ENCODE measurements at regions of chr1 and their contacts with region 1.

Region 1: DNA sequence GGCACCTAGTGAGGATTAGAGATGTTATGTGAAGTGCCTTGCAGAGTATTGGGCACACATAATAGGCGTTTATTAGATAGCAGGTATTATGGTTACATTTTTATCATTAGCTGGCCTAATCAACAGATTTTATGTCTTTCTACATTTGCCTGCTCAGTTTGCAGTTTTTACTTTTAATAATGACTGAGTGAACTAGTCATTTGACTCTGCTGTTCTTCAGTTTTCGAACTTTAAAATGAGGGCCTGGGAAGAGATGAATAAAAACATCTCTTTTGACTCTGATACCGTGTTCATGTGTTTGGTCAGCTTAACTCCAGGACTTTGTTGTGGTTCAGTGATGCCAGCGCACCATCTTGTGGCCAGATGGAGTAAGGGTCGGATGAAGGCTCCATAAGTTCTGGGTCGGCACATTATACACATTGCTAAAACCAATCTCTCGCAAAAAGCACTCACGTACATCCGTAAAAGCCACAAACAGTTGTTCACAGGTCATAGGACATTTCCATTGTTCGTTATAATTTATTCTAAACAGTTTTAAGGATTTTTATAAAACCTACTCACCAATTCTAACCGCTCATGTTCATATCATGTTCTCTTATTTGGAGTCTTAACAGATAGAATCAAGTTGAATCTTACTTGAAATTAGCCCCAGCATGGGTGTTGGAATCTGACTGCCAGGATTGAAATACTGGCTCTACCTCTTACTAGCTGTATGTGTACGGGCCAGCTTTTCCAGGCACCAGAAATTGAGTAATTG is 78.4 kb upstream of the GPR88 start:
- DNase-seq: peak; percentile 82
- ATAC-seq: peak; percentile 92
- H3K4me3 ChIP-seq: no peak overlapping the region
- H3K27ac ChIP-seq: no peak overlapping the region
- H3K4me1 ChIP-seq: no peaks in the 10 kb centered on the region; the same call in 1 of the 2 replicates
- H3K27me3 ChIP-seq: no peaks in the 10 kb centered on the region
- CTCF ChIP-seq: peak; percentile 90
- POLR2A ChIP-seq: 0 out of 2 replicates have a peak, but pooled peaks have one; percentile 28
- RAD21 ChIP-seq: peak; percentile 94

Region 2: DNA sequence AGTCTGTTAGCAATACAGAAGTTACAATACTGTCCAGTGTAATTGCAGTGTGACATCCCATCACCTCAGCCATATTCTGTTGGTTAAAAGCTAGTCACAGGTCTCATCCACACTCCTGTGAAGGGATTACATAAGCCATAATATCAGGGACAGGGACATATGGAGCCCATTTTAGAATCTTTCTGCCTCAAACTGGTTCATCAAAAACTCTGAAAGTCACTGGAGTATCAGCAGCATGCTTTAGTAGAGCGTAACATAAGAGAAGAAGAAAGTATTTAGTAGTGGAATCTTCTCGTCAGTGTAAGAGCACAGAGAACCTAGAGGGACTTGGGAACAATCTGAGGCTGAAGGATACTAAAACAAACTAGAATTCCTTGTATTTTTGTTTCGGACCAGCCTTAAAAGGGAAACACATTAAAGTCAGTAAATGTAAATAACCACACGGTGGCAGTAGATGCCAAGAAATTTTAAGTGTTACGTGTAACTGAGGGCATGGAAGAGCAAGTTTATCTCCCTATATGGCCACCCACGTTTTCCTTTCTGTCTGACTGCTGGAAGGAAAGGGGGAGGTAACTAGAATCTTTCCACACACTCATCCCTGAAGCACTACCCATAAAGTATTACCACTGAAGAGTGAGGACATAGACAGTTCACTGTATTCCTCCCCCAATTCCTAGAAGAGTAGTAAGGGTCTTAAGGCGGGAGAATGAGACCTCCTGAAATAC is 651.0 kb before region 1 on chr1:
- CTCF ChIA-PET with region 1: interaction called, 3 read pairs
- POLR2A ChIA-PET with region 1: no interaction called
- dilution Hi-C with region 1: no loop called
- in situ Hi-C with region 1: loop called (anchors 5 kb)
- intact Hi-C with region 1: loop called (anchors 1 kb)
- DNase-seq: peak; percentile 96
- ATAC-seq: peak; percentile 97
- H3K4me3 ChIP-seq: peak overlapping the region; percentile 7; the same call in 1 of the 2 replicates
- H3K27ac ChIP-seq: no peak overlapping the region
- H3K4me1 ChIP-seq: no peaks in the 10 kb centered on the region; the same call in 1 of the 2 replicates
- H3K27me3 ChIP-seq: peaks cover 18% of the 10 kb centered on the region
- CTCF ChIP-seq: peak; percentile 84
- POLR2A ChIP-seq: no peak
- RAD21 ChIP-seq: peak; percentile 88

Region 3: GRCh38 chr1:100050139-100050538 is 409.4 kb before region 1 on chr1:
- CTCF ChIA-PET with region 1: no interaction called
- POLR2A ChIA-PET with region 1: no interaction called
- dilution Hi-C with region 1: no loop called
- in situ Hi-C with region 1: no loop called
- intact Hi-C with region 1: no loop called
- DNase-seq: no peak
- ATAC-seq: no peak
- H3K4me3 ChIP-seq: no peak overlapping the region
- H3K27ac ChIP-seq: peak overlapping the region; percentile 56; the same call in 1 of the 2 replicates
- H3K4me1 ChIP-seq: peaks cover 2% of the 10 kb centered on the region; the same call in 1 of the 2 replicates
- H3K27me3 ChIP-seq: no peaks in the 10 kb centered on the region
- CTCF ChIP-seq: no peak
- POLR2A ChIP-seq: no peak
- RAD21 ChIP-seq: no peak

Region 4: GRCh38 chr1:100132566-100133477 is 326.7 kb before region 1 on chr1 and contains the starts of genes SASS6 and TRMT13:
- CTCF ChIA-PET with region 1: no interaction called
- POLR2A ChIA-PET with region 1: no interaction called
- dilution Hi-C with region 1: no loop called
- in situ Hi-C with region 1: no loop called
- intact Hi-C with region 1: loop called (anchors 1 kb)
- DNase-seq: peak; percentile 99
- ATAC-seq: peak; percentile 99
- H3K4me3 ChIP-seq: peak within 1 kb of the TSS; percentile 72
- H3K27ac ChIP-seq: peak within 1 kb of the TSS; percentile 71
- H3K4me1 ChIP-seq: peaks cover 1% of the 10 kb centered on the region; the same call in 1 of the 2 replicates
- H3K27me3 ChIP-seq: no peaks in the 10 kb centered on the region
- CTCF ChIP-seq: no peak
- POLR2A ChIP-seq: peak; percentile 45; the same call in 1 of the 2 replicates
- RAD21 ChIP-seq: no peak
- total RNA-seq, gene SASS6: 2.7 and 5.0 TPM in 2 replicates
- total RNA-seq, gene TRMT13: 5.2 and 12.8 TPM in 2 replicates

Region 5: DNA sequence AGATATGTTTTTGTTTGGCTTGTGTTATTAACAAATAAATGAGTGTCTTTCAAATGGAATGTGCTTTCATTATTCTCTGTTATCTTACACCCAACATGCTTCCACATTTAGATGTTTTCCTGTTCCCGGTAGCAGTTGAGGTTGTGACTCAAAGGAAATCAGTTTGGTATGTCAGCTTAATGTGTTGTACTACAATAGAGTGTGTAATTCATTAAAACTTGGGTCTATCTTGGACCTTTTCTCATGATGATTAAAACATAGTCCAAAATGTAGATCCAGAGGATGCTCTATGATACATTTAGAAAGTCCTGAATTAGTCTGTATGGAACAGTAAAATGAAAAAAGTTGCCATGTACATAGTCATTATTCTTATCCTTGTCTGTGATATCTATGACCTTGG is 166.8 kb before region 1 on chr1:
- CTCF ChIA-PET with region 1: interaction called, 4 read pairs
- POLR2A ChIA-PET with region 1: no interaction called
- dilution Hi-C with region 1: no loop called
- in situ Hi-C with region 1: no loop called
- intact Hi-C with region 1: loop called (anchors 5 kb)
- DNase-seq: peak; percentile 3
- ATAC-seq: no peak
- H3K4me3 ChIP-seq: no peak overlapping the region
- H3K27ac ChIP-seq: no peak overlapping the region
- H3K4me1 ChIP-seq: no peaks in the 10 kb centered on the region
- H3K27me3 ChIP-seq: no peaks in the 10 kb centered on the region
- CTCF ChIP-seq: no peak
- POLR2A ChIP-seq: no peak
- RAD21 ChIP-seq: no peak

Region 6: GRCh38 chr1:100502052-100502783 is 42.7 kb after region 1 on chr1:
- CTCF ChIA-PET with region 1: no interaction called
- POLR2A ChIA-PET with region 1: no interaction called
- dilution Hi-C with region 1: no loop called
- in situ Hi-C with region 1: no loop called
- intact Hi-C with region 1: no loop called
- DNase-seq: peak; percentile 23
- ATAC-seq: no peak
- H3K4me3 ChIP-seq: no peak overlapping the region
- H3K27ac ChIP-seq: no peak overlapping the region
- H3K4me1 ChIP-seq: peaks cover 1% of the 10 kb centered on the region; the same call in 1 of the 2 replicates
- H3K27me3 ChIP-seq: no peaks in the 10 kb centered on the region
- CTCF ChIP-seq: no peak
- POLR2A ChIP-seq: no peak
- RAD21 ChIP-seq: no peak

Region 7: DNA sequence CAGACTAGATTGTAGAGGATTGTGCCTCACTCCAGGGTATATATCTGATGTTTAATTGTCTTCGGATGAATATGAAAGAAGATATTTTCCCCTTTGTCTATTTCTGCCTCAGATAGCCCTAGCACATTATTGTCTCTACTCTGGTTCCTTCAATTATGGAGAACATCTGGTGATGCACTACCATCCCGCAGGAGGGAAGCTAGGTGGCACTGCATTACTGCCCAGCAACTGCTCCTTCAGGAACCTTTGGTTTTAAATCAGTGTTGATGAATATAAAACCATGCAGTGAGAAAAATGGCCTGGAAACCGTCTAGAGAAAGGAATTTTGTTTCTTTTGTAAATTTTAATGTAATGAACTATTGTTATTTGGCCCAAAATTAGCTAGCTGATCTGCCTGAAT is 146.9 kb after region 1 on chr1:
- CTCF ChIA-PET with region 1: interaction called, 4 read pairs
- POLR2A ChIA-PET with region 1: no interaction called
- dilution Hi-C with region 1: no loop called
- in situ Hi-C with region 1: loop called (anchors 10 kb)
- intact Hi-C with region 1: loop called (anchors 2 kb)
- DNase-seq: peak; percentile 74
- ATAC-seq: peak; percentile 91
- H3K4me3 ChIP-seq: no peak overlapping the region
- H3K27ac ChIP-seq: no peak overlapping the region
- H3K4me1 ChIP-seq: peaks cover 4% of the 10 kb centered on the region; the same call in 1 of the 2 replicates
- H3K27me3 ChIP-seq: no peaks in the 10 kb centered on the region
- CTCF ChIP-seq: peak; percentile 81
- POLR2A ChIP-seq: peak; percentile 34; the same call in 1 of the 2 replicates
- RAD21 ChIP-seq: peak; percentile 89

Region 8: DNA sequence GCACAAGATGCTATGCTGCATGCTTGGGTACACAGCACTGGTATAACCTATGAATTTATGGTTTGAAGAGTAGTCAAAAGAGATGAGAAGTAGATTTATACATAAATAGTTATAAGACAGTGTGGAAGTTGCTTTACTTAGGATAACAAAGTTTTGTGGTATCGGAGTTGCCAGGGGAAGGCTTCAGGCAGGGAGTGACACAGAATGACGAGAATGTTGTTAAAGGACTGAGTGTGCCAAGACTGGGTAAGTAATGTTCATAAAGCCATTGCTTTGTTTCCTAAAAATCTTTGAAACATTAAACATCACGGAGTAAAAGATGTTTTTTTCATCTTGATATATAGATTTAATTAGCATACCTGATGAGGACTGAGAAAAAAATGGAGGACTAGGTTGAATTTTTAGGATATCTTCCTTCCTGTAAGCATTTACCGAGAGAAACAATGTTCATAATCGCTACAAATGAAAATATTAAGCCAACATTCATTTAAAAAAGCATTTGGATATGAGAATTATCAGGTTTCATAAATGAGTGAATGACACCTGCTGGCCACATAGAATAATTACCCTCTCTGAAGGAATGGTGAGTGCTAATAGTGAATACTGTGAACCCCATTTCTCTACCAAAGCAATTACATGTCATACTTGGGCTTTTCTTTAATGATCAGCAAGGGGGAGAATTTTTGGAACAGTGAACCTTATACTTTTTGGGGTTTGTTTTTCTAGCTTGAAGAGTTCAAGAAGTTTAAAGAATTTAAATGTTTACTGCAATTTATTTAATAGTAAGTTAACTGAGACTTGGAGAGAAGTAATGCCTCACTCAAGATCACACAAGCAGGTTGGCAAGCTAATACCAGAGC is 406.7 kb after region 1 on chr1:
- CTCF ChIA-PET with region 1: interaction called, 22 read pairs
- POLR2A ChIA-PET with region 1: no interaction called
- dilution Hi-C with region 1: no loop called
- in situ Hi-C with region 1: no loop called
- intact Hi-C with region 1: loop called (anchors 1 kb)
- DNase-seq: peak; percentile 70
- ATAC-seq: peak; percentile 56
- H3K4me3 ChIP-seq: no peak overlapping the region
- H3K27ac ChIP-seq: peak overlapping the region; percentile 81
- H3K4me1 ChIP-seq: peaks cover 12% of the 10 kb centered on the region
- H3K27me3 ChIP-seq: no peaks in the 10 kb centered on the region
- CTCF ChIP-seq: peak; percentile 65
- POLR2A ChIP-seq: no peak
- RAD21 ChIP-seq: peak; percentile 72

Measured in IMR-90 (cell line).